ENCODE measurements at regions of chr1 and their contacts with region 1.

Region 1: DNA sequence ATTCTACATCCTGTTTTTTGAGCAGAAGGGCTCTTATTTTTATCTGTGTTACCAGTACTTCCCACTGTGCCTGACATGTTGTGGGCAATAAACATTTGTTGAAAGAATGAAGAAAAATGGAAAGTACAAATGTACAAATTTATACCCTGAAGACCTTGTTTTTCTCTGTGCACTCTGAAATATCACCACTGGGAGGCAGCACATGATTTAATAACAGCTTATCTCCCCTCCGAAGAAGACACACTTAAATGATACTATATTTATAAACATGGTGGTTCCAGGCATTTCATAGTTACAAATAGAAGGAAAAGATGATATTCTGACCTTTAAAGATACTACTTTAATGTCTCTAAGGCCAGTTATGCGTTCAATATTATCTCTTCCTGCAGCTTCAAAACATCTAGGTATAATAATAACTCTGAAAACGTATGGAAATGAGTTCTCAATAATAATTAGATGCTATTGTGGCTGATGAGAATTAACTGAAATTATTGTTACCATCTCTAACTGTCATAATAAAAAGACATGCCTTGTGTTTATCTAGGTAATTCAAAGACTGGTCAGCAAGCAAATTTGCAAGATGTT is 12.8 kb downstream of the DYNLT5 start:
- DNase-seq: peak; percentile 79
- H3K4me3 ChIP-seq: peak overlapping the region; percentile 5
- H3K27ac ChIP-seq: peak overlapping the region; percentile 99
- H3K4me1 ChIP-seq: peaks cover 56% of the 10 kb centered on the region
- CTCF ChIP-seq: peak; percentile 99

Region 2: DNA sequence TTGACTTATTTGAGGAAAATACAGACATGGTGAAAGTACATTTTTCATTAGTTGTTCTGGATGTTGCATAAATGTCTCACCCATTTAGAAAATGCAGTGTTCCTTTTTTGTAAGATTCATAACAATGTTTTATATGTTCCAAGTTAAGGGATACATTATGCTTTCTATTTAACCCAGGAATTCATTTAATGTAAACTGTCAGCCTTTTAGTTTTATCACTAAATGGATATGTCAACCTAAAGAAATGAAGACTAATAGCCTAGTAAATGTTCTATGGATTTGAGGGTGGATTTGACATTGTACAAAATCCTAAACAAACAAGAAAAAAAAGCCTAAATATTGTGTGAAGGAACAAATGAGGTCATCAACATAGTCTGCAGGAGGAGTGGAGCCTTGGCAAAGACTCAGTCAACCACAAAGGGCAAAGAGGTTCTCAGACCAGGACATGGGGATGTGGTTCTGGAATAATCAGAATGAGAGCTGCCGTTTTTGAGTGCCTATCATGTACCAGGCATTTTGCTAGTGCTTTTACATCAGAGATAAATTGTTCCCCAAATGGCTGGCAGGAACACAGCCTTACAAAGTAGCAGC is 44.7 kb after region 1 on chr1:
- CTCF ChIA-PET with region 1: no interaction called
- POLR2A ChIA-PET with region 1: no interaction called
- intact Hi-C with region 1: no loop called
- DNase-seq: no peak
- H3K4me3 ChIP-seq: no peak overlapping the region
- H3K27ac ChIP-seq: no peak overlapping the region
- H3K4me1 ChIP-seq: no peaks in the 10 kb centered on the region
- CTCF ChIP-seq: no peak

Region 3: DNA sequence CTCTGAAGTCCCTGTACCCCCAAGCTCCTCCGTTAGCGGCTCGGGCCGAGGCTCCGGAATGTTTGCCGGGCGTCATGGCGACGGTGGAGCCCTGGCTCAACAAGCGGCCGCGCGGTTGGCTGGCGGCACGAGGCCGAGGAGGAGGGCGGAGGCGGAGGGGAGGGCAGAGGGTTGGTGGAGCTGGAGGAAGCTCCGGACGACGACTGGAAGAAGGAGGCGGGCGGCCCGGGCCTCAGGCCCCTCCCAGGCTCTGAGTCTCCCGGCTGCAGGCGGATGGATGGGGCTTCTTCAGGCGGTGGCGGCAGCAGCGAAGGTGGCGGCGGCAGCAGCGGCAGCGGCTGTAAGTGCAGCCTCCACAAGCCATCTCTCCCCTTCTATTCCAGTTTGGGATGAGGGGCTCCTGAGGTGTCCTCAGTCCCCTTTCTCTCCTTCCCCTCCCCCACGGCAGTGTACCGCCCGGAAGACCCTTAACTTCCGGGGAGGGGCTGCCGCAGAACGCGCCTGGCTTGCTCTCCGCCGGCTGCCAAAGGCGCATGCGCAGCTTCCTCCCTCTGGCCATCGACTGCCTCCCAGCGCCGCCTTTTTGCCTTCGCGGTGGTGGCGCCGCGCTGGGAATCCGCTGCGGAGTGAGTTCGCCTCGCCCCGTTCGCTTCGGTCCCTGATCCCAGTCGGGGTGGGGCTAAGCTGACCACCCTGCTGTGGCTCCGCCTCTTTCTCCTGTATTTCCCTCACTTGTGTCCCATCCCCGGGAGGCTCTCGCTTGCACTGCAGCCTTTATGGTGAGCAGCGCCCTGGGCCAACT is 159.9 kb after region 1 on chr1 and contains the starts of genes DNAI4 and MIER1:
- CTCF ChIA-PET with region 1: no interaction called
- POLR2A ChIA-PET with region 1: interaction called, 9 read pairs
- intact Hi-C with region 1: loop called (anchors 1 kb)
- DNase-seq: peak; percentile 97
- H3K4me3 ChIP-seq: peak within 1 kb of the TSS; percentile 96
- H3K27ac ChIP-seq: peak within 1 kb of the TSS; percentile 70
- H3K4me1 ChIP-seq: peaks cover 45% of the 10 kb centered on the region
- CTCF ChIP-seq: 0 out of 2 replicates have a peak, but pooled peaks have one; percentile 34
- total RNA-seq, gene DNAI4: 1.9 and 6.1 TPM in 2 replicates
- total RNA-seq, gene MIER1: 24.4 and 38.0 TPM in 2 replicates

Region 4: GRCh38 chr1:66981679-66982078 is 216.6 kb after region 1 on chr1:
- CTCF ChIA-PET with region 1: no interaction called
- POLR2A ChIA-PET with region 1: interaction called, 3 read pairs
- intact Hi-C with region 1: loop called (anchors 1 kb)
- DNase-seq: peak; percentile 50
- H3K4me3 ChIP-seq: peak overlapping the region; percentile 31
- H3K27ac ChIP-seq: peak overlapping the region; percentile 41
- H3K4me1 ChIP-seq: peaks cover 53% of the 10 kb centered on the region
- CTCF ChIP-seq: no peak

Region 5: GRCh38 chr1:67053785-67054772 is 289.0 kb after region 1 on chr1 and contains the start of gene SLC35D1:
- CTCF ChIA-PET with region 1: no interaction called
- POLR2A ChIA-PET with region 1: interaction called, 3 read pairs
- intact Hi-C with region 1: loop called (anchors 1 kb)
- DNase-seq: peak; percentile 91
- H3K4me3 ChIP-seq: peak within 1 kb of the TSS; percentile 89
- H3K27ac ChIP-seq: peak within 1 kb of the TSS; percentile 76
- H3K4me1 ChIP-seq: peaks cover 20% of the 10 kb centered on the region
- CTCF ChIP-seq: no peak
- total RNA-seq, gene SLC35D1: 10.8 and 11.2 TPM in 2 replicates

Region 6: DNA sequence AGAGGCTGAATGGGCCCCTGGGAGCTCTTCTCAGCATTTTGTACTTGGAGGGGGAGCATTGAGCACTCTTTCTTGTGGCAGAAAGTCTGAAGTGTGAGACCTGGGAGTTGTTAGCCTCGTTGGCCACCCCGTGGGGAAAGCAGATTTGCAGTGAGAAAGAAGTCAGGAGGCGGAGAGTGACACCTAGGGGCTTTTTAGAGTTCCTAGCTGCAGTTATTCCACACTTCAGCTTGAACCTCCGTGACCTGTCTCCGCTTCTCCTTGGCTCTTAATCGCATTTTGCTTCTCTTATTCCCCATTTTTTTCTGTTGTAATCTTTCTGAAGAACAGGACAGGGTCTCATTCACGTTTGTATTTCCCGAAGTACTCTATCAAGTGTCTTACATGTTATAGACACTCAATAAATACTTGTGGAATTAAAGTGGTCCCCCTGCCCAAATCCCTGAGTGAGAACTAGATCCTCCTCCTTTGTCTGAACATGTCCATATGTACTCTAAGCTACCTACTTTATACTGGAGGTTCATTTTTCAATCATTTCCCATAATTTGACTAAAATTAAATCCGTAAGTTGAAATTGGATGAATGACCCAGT is 384.2 kb after region 1 on chr1:
- CTCF ChIA-PET with region 1: interaction called, 5 read pairs
- POLR2A ChIA-PET with region 1: interaction called, 4 read pairs
- intact Hi-C with region 1: loop called (anchors 1 kb)
- DNase-seq: peak; percentile 90
- H3K4me3 ChIP-seq: peak overlapping the region; percentile 0
- H3K27ac ChIP-seq: peak overlapping the region; percentile 15
- H3K4me1 ChIP-seq: peaks cover 7% of the 10 kb centered on the region
- CTCF ChIP-seq: peak; percentile 96

Region 7: GRCh38 chr1:67430352-67431155 is 665.5 kb after region 1 on chr1 and contains the start of gene SERBP1:
- CTCF ChIA-PET with region 1: no interaction called
- POLR2A ChIA-PET with region 1: interaction called, 3 read pairs
- intact Hi-C with region 1: loop called (anchors 2 kb)
- DNase-seq: peak; percentile 99
- H3K4me3 ChIP-seq: peak within 1 kb of the TSS; percentile 99
- H3K27ac ChIP-seq: peak within 1 kb of the TSS; percentile 96
- H3K4me1 ChIP-seq: peaks cover 38% of the 10 kb centered on the region
- CTCF ChIP-seq: no peak; the same call in 1 of the 2 replicates
- total RNA-seq, gene SERBP1: 270 and 443 TPM in 2 replicates

Region 8: DNA sequence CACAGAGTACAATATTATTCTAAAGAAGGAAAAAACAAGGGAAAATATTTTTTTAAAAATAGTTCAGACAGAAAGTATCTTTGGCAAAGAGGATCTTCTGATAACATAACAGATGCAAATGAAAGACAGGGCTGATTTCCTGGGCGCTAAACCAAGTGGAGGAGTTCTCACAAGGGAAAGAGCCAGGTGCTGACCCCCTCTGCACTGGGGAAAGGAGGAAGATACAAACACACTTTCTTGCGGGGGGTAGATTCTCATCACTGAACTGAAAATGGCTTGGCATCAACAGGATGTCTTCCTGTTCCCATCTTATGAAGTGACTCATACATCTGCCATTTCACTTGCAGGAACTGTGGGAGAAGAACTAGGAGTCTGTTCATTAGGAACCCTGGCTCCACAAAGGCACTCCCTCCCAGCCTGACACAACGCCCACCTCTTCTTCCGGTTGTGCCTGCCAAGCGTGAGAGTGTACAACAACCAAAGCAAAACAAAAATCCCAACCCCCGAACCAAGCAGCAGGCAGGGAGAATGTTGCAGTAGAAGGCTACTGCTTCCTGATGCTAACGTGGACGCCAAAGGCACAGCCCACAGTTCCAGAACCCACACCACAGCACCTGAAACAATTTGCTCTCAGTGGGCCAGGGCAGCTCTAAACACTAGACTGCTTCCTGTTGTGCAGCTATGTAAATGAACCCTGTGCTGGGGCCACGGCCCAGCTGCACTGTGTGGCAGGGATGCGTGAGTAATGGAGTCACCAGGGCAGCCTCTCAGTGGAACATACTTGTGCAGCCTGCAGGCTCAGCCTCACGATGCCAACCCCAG is 970.9 kb after region 1 on chr1:
- CTCF ChIA-PET with region 1: no interaction called
- POLR2A ChIA-PET with region 1: interaction called, 3 read pairs
- intact Hi-C with region 1: loop called (anchors 10 kb)
- DNase-seq: peak; percentile 93
- H3K4me3 ChIP-seq: peak overlapping the region; percentile 67
- H3K27ac ChIP-seq: peak overlapping the region; percentile 96
- H3K4me1 ChIP-seq: peaks cover 74% of the 10 kb centered on the region
- CTCF ChIP-seq: no peak